ENCODE measurements at regions of chr4 and their contacts with region 1.

Region 1: DNA sequence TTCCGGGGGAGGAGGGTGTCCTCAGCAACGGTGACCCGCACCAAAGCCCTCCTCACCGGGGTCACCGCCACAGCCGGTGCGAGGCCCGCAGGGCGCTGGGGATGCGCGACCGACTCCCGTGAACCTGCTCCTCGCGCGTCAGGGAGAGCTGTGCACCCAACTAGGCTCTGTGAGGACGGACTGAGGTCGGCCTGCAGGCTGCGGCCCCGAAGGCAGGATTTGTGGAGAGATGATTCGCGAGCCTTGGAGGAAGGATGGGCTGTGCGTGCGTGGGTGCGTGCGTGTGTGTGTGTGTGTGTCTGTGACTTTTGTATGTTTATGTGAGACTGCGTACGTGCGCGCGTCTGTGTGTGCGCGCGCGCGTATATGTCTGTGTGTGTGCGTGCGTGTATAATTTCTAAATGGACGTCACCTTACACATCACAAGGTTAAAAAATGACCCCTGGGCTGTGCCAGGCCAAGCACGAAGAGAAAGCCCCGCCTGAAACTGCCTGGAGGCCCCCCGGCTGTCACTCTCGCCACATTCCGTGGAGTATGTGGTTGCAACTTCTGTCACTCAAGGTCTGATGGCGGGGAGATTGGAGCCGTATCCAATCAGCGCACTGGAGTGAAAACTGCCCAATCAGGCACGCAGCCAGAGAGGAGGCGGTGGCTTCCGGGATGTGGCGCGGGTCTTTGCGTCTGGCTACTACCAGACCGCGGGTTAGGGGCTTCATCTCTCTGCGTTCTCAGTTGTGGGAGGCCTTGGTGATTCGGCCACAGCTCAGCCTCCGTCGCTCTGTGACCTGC is at the start of gene ZNF141:
- H3K4me3 Mint-ChIP-seq: peak within 1 kb of the TSS; percentile 99
- H3K27ac Mint-ChIP-seq: peak within 1 kb of the TSS; percentile 100
- H3K4me1 Mint-ChIP-seq: peaks cover 21% of the 10 kb centered on the region
- H3K27me3 Mint-ChIP-seq: peaks cover 4% of the 10 kb centered on the region

Region 2: GRCh38 chr4:473570-474457 is 136.5 kb after region 1 on chr4:
- intact Hi-C with region 1: loop called (anchors 10 kb)
- H3K4me3 Mint-ChIP-seq: peak overlapping the region; percentile 91
- H3K27ac Mint-ChIP-seq: peak overlapping the region; percentile 100
- H3K4me1 Mint-ChIP-seq: peaks cover 28% of the 10 kb centered on the region
- H3K27me3 Mint-ChIP-seq: no peaks in the 10 kb centered on the region

Measured in dendritic cell treated with granulocyte-macrophage colony-stimulating factor and Interleukin-4, amounts not matched to agents 40 ng/mL and 50 ng/mL, for 4 days (primary cell).